Activated B cell treated with CpG ODN at 0.5 μM for 24 hours (primary cell): ENCODE measurements at regions of chr7 and their contacts with region 1.

Region 1: GRCh38 chr7:55534175-55534915 is 38.0 kb downstream of the VOPP1 start:
- DNase-seq: peak; percentile 73
- ATAC-seq: peak; percentile 71
- H3K4me3 Mint-ChIP-seq: peak overlapping the region; percentile 85
- H3K27ac Mint-ChIP-seq: peak overlapping the region; percentile 98
- H3K4me1 Mint-ChIP-seq: peaks cover 99% of the 10 kb centered on the region
- H3K27me3 Mint-ChIP-seq: no peaks in the 10 kb centered on the region
- CTCF ChIP-seq: no peak

Region 2: DNA sequence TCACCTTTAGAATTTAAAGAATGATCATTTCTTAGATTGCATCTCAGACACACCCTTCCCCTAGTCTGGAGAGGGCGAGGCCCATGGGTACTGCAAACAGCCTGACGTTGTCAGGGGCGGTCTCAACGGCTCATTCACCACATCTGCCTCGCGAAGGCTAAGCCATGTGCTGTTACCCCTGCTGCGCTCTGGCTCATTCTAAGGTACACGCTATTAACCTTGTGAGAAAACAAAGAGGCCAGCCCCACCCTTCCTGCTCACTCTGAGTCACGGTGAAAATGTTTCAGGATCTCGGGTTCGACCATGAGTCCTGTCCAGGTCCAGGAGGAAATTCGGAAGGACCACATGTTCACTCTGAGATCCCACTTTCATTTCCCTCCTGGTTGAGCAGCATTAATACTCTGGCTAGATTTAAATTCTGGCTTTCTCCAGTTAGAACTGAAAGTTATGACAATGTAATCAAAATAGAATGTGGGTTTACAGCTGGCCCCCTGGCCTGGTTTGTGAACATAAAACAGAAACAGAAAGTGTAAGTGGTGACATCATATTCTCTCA is 460.3 kb before region 1 on chr7:
- CTCF ChIA-PET with region 1: no interaction called
- POLR2A ChIA-PET with region 1: no interaction called
- intact Hi-C with region 1: loop called (anchors 2 kb)
- DNase-seq: peak; percentile 27
- ATAC-seq: peak; percentile 86
- H3K4me3 Mint-ChIP-seq: peak overlapping the region; percentile 70
- H3K27ac Mint-ChIP-seq: peak overlapping the region; percentile 73
- H3K4me1 Mint-ChIP-seq: peaks cover 23% of the 10 kb centered on the region
- H3K27me3 Mint-ChIP-seq: peaks cover 5% of the 10 kb centered on the region
- CTCF ChIP-seq: no peak

Region 3: DNA sequence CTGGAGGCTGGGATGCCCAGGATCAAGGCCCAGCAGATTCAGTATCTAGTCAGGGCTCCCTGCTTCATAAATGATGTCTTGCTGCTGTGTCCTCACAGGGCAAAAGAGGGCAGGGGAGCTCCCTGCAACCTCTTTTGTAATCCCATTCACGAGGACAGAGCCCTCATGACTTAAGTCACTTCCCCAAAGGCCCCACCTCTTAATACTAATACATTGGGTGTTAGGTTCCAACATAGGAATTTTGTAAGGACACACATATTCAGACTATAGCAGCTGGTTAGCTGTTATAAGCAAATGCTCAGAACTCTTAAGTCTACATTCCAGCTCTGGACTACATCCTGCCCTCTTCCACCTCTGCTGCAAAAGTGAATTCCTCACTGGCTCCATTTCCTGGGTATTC is 25.0 kb before region 1 on chr7:
- CTCF ChIA-PET with region 1: interaction called, 4 read pairs
- POLR2A ChIA-PET with region 1: interaction called, 357 read pairs
- intact Hi-C with region 1: no loop called
- DNase-seq: no peak
- ATAC-seq: no peak
- H3K4me3 Mint-ChIP-seq: peak overlapping the region; percentile 19
- H3K27ac Mint-ChIP-seq: peak overlapping the region; percentile 73
- H3K4me1 Mint-ChIP-seq: peaks cover 88% of the 10 kb centered on the region
- H3K27me3 Mint-ChIP-seq: no peaks in the 10 kb centered on the region
- CTCF ChIP-seq: no peak

Region 4: DNA sequence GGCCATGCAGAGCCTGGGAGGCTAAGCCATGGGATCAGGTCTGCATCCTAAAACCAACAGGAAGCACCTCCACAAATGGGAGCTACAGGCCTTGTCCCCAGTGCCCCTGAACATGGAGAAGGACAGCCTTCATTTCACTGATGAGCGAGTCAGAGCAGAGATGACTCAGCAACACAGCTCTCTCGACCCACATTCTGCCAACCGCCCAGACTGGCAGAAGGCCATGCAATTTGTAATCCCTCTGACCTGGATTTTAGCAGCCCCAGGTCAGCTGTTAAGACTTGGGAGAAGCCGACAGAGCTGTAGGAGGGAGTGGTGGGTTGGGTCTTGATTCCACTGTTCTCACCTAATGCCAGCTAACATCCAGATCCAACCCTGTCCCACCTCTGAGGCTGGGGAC is 12.5 kb after region 1 on chr7:
- CTCF ChIA-PET with region 1: interaction called, 16 read pairs
- POLR2A ChIA-PET with region 1: interaction called, 163 read pairs
- intact Hi-C with region 1: loop called (anchors 1 kb)
- DNase-seq: no peak
- ATAC-seq: peak; percentile 56
- H3K4me3 Mint-ChIP-seq: peak overlapping the region; percentile 19
- H3K27ac Mint-ChIP-seq: peak overlapping the region; percentile 77
- H3K4me1 Mint-ChIP-seq: peaks cover 89% of the 10 kb centered on the region
- H3K27me3 Mint-ChIP-seq: no peaks in the 10 kb centered on the region
- CTCF ChIP-seq: no peak

Region 5: DNA sequence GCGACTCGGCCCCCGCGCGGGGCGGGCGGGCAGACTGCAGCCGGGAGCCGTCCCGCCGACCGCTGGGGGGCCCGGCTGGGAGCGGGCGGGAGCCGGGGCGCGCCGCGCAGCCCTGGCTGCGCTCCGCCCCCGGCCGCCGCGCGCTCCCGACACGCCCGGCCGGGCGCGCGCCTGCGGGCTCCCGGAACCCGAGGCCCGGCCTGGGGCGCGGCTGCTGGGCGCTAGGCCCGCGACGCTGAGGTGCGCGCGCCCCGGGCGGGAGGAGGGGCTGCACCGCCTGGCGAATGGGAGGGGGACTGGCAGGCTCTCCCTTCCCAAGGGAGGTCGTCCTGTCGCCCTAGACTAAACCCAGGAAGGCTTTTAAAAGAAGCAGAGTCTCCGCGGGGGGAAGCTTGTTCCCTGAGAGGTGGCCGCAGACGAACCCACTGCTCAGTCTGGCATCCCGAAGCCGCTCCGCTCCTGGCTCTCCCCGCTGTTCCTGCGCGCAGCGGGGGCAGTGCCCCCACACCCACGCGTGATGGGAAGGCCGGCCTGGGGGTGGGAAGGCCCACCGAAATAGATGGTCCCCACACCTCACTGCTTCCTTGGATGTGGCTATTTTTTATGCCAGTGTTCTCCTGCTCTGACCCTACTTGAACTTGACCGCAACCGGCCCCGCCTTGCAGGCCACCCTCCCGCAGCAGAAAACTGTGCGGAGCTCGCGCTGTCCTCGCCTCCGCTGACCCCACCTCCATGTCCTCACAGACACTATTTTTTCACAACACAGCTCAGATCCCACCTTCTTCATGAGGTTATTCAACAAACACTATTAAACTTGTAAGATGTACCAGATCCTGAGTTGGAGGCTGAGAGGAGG is 38.3 kb after region 1 on chr7 and contains the start of gene VOPP1:
- CTCF ChIA-PET with region 1: interaction called, 7 read pairs
- POLR2A ChIA-PET with region 1: interaction called, 651 read pairs
- intact Hi-C with region 1: loop called (anchors 1 kb)
- DNase-seq: peak; percentile 79
- ATAC-seq: peak; percentile 63
- H3K4me3 Mint-ChIP-seq: peak within 1 kb of the TSS; percentile 97
- H3K27ac Mint-ChIP-seq: peak within 1 kb of the TSS; percentile 93
- H3K4me1 Mint-ChIP-seq: peaks cover 49% of the 10 kb centered on the region
- H3K27me3 Mint-ChIP-seq: no peaks in the 10 kb centered on the region
- CTCF ChIP-seq: no peak
- total RNA-seq, gene VOPP1: 403 and 438 TPM in 2 replicates

Region 6: DNA sequence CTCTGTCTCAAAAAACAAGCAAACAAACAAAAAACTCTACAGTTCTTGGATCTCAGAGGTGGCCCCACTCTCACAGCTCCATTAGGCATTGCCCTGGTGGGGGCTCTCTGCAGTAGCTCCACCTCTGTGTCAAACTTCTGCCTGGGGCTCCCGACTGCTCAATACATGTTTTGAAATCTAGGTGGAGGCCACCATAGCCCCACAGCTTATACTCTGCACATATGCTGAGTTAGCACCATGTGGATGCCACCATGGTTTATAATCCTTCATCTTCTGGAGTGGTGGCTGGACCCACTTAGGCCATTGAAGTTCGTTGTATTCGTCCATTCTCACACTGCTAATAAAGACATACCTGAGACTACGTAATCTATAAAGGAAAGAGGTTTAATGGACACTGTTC is 249.8 kb after region 1 on chr7:
- CTCF ChIA-PET with region 1: no interaction called
- POLR2A ChIA-PET with region 1: no interaction called
- intact Hi-C with region 1: no loop called
- DNase-seq: no peak
- ATAC-seq: no peak
- H3K4me3 Mint-ChIP-seq: no peak overlapping the region
- H3K27ac Mint-ChIP-seq: no peak overlapping the region
- H3K4me1 Mint-ChIP-seq: no peaks in the 10 kb centered on the region
- H3K27me3 Mint-ChIP-seq: no peaks in the 10 kb centered on the region
- CTCF ChIP-seq: no peak

Region 7: GRCh38 chr7:55887821-55888247 is 353.5 kb after region 1 on chr7:
- CTCF ChIA-PET with region 1: no interaction called
- POLR2A ChIA-PET with region 1: no interaction called
- intact Hi-C with region 1: loop called (anchors 1 kb)
- DNase-seq: no peak
- ATAC-seq: no peak
- H3K4me3 Mint-ChIP-seq: peak overlapping the region; percentile 78
- H3K27ac Mint-ChIP-seq: peak overlapping the region; percentile 60
- H3K4me1 Mint-ChIP-seq: peaks cover 4% of the 10 kb centered on the region
- H3K27me3 Mint-ChIP-seq: no peaks in the 10 kb centered on the region
- CTCF ChIP-seq: no peak

Region 8: DNA sequence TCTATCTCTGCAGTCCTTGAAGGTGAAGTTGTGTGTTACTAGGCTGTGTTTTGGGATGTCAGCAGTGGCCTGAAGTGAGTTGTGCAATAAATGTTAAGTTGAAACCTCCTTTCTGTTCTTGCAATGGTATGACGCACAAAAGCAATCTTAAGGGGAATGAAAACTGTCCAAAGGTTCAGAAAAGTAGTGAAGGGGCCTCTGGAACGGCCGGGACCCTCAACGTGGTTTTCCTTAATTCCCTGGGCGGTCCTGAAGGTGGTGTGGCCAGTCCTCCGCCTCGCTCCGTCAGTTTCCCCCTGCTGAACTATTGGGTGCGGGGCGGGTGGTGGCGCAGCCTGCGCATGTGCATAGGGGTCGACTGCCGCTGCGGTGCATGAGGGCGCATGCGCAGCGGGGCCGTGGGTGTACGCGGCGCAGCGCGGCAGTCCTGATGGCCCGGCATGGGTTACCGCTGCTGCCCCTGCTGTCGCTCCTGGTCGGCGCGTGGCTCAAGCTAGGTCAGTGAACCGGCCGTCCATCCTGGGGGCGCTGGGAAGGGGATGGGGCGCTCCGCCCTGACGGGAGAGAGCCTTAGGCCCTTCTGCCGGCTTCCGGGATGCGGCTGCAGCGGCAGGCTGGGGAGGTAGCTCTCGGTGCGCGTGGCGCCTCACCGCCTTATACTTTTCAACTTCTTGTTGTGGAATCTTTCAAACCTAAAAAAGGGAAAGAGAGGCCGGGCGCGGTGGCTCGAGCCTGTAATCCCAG is 529.7 kb after region 1 on chr7 and contains the start of gene SUMF2:
- CTCF ChIA-PET with region 1: no interaction called
- POLR2A ChIA-PET with region 1: interaction called, 4 read pairs
- intact Hi-C with region 1: loop called (anchors 1 kb)
- DNase-seq: peak; percentile 91
- ATAC-seq: peak; percentile 92
- H3K4me3 Mint-ChIP-seq: peak within 1 kb of the TSS; percentile 92
- H3K27ac Mint-ChIP-seq: peak within 1 kb of the TSS; percentile 85
- H3K4me1 Mint-ChIP-seq: peaks cover 32% of the 10 kb centered on the region
- H3K27me3 Mint-ChIP-seq: no peaks in the 10 kb centered on the region
- CTCF ChIP-seq: no peak
- total RNA-seq, gene SUMF2: 91.1 and 103 TPM in 2 replicates